Right cardiac atrium (tissue), 5 donors: ENCODE measurements at regions of chr13 and their contacts with region 1.

Region 1: DNA sequence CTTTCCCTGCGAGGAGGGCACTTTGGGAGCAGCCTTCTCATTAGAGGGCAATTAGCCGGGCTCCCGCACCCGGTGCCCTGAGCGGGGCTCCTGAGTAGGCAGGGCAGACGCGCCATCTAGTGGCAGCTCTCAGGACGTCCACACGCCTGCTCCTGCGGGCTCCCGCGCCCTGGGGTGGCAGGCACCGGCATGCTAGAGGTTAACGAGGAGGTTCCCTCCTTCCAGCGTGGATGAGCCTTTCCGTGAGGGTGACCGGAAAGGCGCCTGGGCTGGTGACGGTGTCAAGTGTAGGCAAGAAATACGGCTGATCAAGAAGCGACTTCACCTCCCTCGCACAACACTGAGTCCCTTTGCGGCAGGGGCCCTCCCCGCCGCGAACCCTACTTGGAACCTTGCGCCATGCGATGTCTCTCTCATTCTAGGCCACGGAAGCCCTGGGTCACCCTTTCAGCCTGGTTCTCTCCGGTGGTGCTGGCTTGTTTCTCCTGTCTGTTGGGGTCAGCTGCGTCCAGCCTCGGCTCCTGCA is 67.7 kb downstream of the ALOX5AP start:
- DNase-seq: peak; percentile 89 to 95 (median 94)
- ATAC-seq: peak; percentile 96 to 97
- H3K4me3 ChIP-seq: no peak overlapping the region
- H3K27ac ChIP-seq: no peak overlapping the region
- H3K4me1 ChIP-seq: no peaks in the 10 kb centered on the region
- H3K27me3 ChIP-seq: no peaks in the 10 kb centered on the region

Region 2: DNA sequence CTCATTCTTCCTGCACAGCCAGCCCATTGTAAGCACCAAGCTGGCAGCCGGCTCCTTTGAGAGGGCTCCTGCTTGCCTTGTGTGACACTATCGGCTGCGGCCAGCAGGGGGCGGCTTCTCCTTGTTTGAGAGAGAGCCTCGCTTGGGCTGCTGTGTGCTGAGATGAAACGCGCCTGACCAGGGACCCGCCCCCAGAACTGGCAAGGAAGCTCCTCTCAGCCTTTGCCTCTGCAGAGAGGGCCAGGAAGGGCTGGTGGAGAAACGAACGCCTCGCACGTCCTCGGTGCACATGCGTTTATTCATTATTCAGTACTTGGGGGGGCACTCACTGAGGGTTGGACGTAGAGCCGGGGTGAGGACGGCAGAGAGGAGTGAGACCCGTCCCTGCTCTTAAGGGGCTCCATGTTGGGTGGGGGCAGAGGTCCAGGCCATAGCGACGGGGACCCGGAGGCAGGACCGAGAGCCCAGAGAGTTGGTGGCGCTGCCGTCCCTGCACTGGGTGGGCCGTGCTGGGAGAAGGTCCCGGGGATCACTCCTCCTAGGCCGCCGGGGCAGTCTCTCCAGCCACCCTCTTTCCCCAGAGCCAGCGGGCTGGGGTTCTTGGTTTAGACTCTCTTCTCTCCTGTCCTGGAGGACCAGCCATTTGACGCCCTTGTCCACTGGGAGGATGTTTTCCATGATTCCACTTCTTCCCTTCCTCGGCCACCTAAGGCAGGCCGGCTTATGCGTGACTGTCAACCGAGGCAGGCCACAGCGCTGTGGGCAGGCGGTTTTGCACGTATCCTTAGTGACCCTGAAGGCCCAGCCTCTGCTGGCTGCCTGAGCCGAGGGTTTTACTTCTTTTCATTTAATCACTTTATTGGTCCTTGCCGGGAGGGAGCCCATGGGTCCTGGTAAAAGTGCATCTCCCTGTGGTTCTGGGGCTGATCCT is 670.1 kb before region 1 on chr13:
- intact Hi-C with region 1: loop called in 1 of 4 experiments (anchors 5 kb)
- DNase-seq: peak; percentile 97 to 99 (median 99)
- ATAC-seq: peak; percentile 95
- H3K4me3 ChIP-seq: no peak overlapping the region
- H3K27ac ChIP-seq: no peak overlapping the region
- H3K4me1 ChIP-seq: no peaks in the 10 kb centered on the region
- H3K27me3 ChIP-seq: no peaks in the 10 kb centered on the region

Region 3: GRCh38 chr13:30673669-30674521 is 129.1 kb before region 1 on chr13:
- intact Hi-C with region 1: loop called in 1 of 4 experiments (anchors 10 kb)
- DNase-seq: peak; percentile 90 to 96 (median 95)
- ATAC-seq: peak; percentile 97
- H3K4me3 ChIP-seq: peak overlapping the region; percentile 47
- H3K27ac ChIP-seq: peak overlapping the region; percentile 57
- H3K4me1 ChIP-seq: peaks cover 2% of the 10 kb centered on the region
- H3K27me3 ChIP-seq: no peaks in the 10 kb centered on the region

Region 4: GRCh38 chr13:30685320-30685859 is 117.6 kb before region 1 on chr13:
- intact Hi-C with region 1: loop called in 1 of 4 experiments (anchors 5 kb)
- DNase-seq: no peak
- ATAC-seq: no peak
- H3K4me3 ChIP-seq: no peak overlapping the region
- H3K27ac ChIP-seq: no peak overlapping the region
- H3K4me1 ChIP-seq: no peaks in the 10 kb centered on the region
- H3K27me3 ChIP-seq: no peaks in the 10 kb centered on the region

Region 5: GRCh38 chr13:30865123-30866049 is 62.4 kb after region 1 on chr13:
- intact Hi-C with region 1: loop called in 1 of 4 experiments (anchors 5 kb)
- DNase-seq: peak; percentile 83 to 93 (median 87)
- ATAC-seq: peak; percentile 76 to 85
- H3K4me3 ChIP-seq: no peak overlapping the region
- H3K27ac ChIP-seq: peak overlapping the region; percentile 30
- H3K4me1 ChIP-seq: peaks cover 5% of the 10 kb centered on the region
- H3K27me3 ChIP-seq: no peaks in the 10 kb centered on the region

Region 6: GRCh38 chr13:31044377-31045285 is 241.6 kb after region 1 on chr13:
- intact Hi-C with region 1: loop called in 1 of 4 experiments (anchors 10 kb)
- DNase-seq: peak; percentile 70 to 89 (median 86)
- ATAC-seq: peak; percentile 83 to 86
- H3K4me3 ChIP-seq: no peak overlapping the region
- H3K27ac ChIP-seq: no peak overlapping the region
- H3K4me1 ChIP-seq: peaks cover 2% of the 10 kb centered on the region
- H3K27me3 ChIP-seq: no peaks in the 10 kb centered on the region